Activated naive CD4-positive, alpha-beta T cell treated with anti-CD3 and anti-CD28 coated beads for 36 hours (primary cell): ENCODE measurements at regions of chr13 and their contacts with region 1.

Region 1: GRCh38 chr13:48731957-48732569 is 78.3 kb downstream of the CYSLTR2 start:
- DNase-seq: peak; percentile 65
- H3K4me3 Mint-ChIP-seq: peak overlapping the region; percentile 58
- H3K27ac Mint-ChIP-seq: no peak overlapping the region
- H3K4me1 Mint-ChIP-seq: peaks cover 19% of the 10 kb centered on the region
- H3K27me3 Mint-ChIP-seq: peaks cover 3% of the 10 kb centered on the region

Region 2: DNA sequence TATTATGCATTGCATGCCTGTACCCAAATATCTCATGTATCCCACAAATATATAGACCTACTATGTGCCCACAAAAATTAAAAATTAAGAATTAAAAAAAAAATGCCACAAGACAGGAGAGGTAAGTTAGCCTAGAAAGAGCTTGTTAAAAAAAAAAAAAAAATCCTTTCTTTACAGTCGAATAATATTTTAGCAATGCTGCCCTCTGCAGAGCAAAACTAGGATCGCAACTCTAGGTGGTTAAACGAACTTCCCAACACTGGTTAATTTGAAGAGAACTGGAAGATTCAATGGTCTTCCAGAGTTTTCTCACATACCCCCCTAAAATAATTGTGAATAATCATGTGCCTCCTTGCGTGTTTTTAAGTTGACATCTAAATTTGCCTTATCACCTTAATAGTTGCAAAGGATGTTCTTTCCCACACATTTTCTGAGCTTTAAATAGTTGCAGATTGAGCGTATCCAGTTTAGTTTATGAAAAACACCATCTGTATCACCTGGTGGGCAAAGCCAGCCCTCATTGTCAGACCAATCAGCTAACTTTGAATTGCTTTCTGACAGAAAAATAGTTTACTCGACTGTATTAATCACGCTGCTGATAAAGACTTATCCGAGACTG is 151.8 kb before region 1 on chr13:
- CTCF ChIA-PET with region 1: interaction called, 3 read pairs
- intact Hi-C with region 1: loop called (anchors 5 kb)
- DNase-seq: peak; percentile 88
- H3K4me3 Mint-ChIP-seq: no peak overlapping the region
- H3K27ac Mint-ChIP-seq: no peak overlapping the region
- H3K4me1 Mint-ChIP-seq: peaks cover 2% of the 10 kb centered on the region
- H3K27me3 Mint-ChIP-seq: peaks cover 6% of the 10 kb centered on the region

Region 3: DNA sequence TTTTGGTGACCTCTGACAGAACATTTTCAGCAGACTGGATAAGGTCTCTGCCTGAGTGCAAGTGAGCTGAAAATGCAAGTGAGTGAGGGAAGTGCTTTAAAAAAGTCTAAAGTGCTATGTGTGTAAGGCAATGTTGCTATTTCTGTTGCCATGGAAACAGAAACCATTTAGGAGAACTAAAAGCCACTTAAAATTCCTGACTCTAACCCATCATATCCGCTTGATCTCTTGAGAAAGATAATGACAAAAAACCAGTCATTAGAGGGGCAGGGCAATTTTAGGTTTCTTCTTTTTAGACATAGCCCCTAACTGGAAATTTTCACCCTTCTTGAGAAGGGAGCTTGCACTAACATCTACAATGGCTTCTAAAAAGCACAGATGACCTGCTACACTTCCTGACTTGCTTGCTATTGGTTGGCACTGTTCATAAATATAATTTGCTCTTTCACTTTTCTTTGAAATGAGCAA is 78.6 kb before region 1 on chr13 and contains the start of gene CYSLTR2:
- CTCF ChIA-PET with region 1: interaction called, 3 read pairs
- intact Hi-C with region 1: loop called (anchors 1 kb)
- DNase-seq: peak; percentile 27
- H3K4me3 Mint-ChIP-seq: peak within 1 kb of the TSS; percentile 75
- H3K27ac Mint-ChIP-seq: peak within 1 kb of the TSS; percentile 82
- H3K4me1 Mint-ChIP-seq: peaks cover 29% of the 10 kb centered on the region
- H3K27me3 Mint-ChIP-seq: no peaks in the 10 kb centered on the region
- total RNA-seq, gene CYSLTR2: 1.3 to 1.7 TPM

Region 4: DNA sequence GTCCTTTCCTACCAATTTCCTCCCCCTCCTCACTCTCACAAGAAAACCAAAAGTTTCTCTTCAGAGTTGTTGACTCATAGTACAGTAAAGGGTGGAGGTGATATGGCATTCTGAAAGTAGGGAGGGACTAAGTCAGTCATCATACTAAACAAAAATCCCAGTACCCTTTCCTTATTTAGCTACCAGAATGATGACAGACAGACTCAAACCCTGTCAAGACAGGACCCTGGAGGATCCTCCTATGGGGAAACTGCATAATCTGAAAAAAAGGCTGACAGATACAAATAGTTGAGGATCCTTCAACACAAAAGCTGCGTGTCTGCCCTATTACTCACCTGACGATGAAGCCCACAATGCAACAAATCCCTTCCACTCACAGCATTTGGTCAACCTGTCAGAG is 22.9 kb before region 1 on chr13:
- CTCF ChIA-PET with region 1: interaction called, 5 read pairs
- intact Hi-C with region 1: loop called (anchors 1 kb)
- DNase-seq: no peak
- H3K4me3 Mint-ChIP-seq: no peak overlapping the region
- H3K27ac Mint-ChIP-seq: no peak overlapping the region
- H3K4me1 Mint-ChIP-seq: peaks cover 11% of the 10 kb centered on the region
- H3K27me3 Mint-ChIP-seq: no peaks in the 10 kb centered on the region